Astrocyte of the cerebellum (primary cell): ENCODE measurements at regions of chr2 and their contacts with region 1.

Region 1: DNA sequence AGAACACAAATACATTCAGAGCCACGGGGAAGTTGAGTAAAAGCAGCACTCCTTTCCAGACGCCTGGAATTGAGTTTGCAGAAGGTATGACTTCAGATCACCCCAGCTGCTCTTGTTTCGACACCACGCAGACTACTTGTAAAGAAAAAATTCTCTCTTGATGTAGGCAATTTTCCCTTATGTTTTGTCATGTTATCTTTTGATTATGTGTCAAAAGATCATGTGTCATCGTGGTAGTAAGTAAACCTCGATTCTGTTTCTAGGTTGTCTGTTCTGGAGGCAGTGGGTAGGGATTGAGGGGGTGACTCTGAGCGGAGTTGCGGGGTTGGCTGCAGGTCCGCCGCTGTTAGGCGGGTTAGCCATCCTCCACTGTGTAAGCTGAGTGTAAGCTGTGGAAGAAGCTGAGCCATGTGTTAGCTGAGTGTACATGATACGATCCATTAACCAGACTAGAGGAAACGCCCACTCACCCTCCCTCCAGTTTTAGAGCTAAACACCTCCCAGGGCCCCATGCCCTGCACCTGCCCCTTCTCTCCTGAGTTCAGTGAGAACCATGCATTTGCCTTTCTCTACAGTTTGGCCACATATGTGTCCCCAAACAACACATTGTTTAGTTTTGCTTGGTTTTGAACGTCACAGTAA is 181.8 kb downstream of the SNTG2 start:
- DNase-seq: no peak
- H3K4me3 ChIP-seq: no peak overlapping the region
- CTCF ChIP-seq: no peak

Region 2: GRCh38 chr2:1070616-1071015 is 61.8 kb before region 1 on chr2:
- in situ Hi-C with region 1: loop called (anchors 5 kb)
- DNase-seq: no peak
- H3K4me3 ChIP-seq: no peak overlapping the region
- CTCF ChIP-seq: no peak